H1 (cell line): ENCODE measurements at regions of chr12 and their contacts with region 1.

Region 1: GRCh38 chr12:120200364-120200800 is 529 bp downstream of the RPLP0 start:
- DNase-seq: no peak
- H3K4me3 ChIP-seq: peak overlapping the region; percentile 91 to 99 (median 96)
- H3K27ac ChIP-seq: peak overlapping the region; percentile 85
- H3K4me1 ChIP-seq: peaks cover 0 to 2% (median under 1%) of the 10 kb centered on the region in 4 experiments; a peak in 5 of 7 replicates
- H3K27me3 ChIP-seq: no peaks in the 10 kb centered on the region
- CTCF ChIP-seq: no peak
- EP300 ChIP-seq: no peak
- POLR2A ChIP-seq: no peak
- RAD21 ChIP-seq: no peak

Region 2: DNA sequence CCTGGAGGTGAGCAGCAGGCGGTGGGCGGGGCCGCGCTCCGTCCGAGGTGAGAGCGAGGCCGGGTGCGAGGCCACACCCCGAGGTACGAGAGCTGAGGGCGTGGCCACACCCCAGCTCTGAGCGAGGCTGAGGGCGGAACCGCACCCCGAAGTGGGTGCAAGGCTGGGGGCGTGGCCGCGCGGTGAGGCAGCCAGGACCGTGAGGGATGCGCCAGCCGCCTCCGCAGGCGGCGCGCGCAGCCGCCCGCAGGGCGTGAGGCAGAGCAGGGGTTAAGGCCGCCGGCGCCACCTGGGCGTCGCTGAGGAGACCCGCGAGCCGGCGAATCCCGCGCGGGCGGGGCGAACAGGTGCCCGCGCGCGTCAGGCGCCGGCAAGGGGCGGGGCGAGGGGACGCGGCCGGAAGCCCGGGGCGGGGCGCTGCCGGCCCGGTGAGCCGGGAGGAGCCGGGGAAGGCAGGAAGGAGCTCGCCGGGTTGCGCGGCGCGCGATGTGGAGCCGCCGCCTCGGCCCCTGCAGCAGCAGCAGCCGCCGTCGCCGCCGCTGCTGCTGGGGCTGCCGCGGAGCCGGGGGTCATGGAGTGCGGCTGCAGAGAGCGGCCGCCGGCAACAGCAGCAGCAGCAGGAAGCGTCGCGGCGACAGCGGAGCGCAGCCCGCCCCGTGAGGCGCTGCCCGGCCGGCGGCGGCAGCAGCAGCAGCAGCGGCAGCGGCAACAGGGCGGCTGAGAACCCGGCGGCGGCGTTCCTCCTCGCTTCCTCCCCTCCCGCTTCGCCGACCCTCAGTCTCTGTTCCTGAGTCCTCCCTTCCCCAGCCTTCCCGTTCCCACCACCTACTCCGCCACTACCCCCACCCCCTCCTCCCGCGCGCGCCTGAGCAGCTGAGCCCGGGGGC is 211.4 kb before region 1 on chr12 and contains the start of gene BICDL1:
- CTCF ChIA-PET with region 1: no interaction called
- POLR2A ChIA-PET with region 1: interaction called, 12 read pairs
- DNase-seq: peak; percentile 93 to 96
- H3K4me3 ChIP-seq: peak within 1 kb of the TSS; percentile 59 to 69 (median 62)
- H3K27ac ChIP-seq: no peak within 1 kb of the TSS
- H3K4me1 ChIP-seq: peaks cover 6 to 11% (median 9%) of the 10 kb centered on the region in 4 experiments
- H3K27me3 ChIP-seq: no peaks in the 10 kb centered on the region; a peak in 2 of 7 replicates
- CTCF ChIP-seq: no peak
- EP300 ChIP-seq: no peak
- POLR2A ChIP-seq: no peak
- RAD21 ChIP-seq: no peak
- total RNA-seq, gene BICDL1: 25.9 and 26.9 TPM in 2 replicates

Region 3: GRCh38 chr12:120150919-120151525 is 49.4 kb before region 1 on chr12:
- CTCF ChIA-PET with region 1: interaction called, 4 read pairs
- POLR2A ChIA-PET with region 1: interaction called, 19 read pairs
- DNase-seq: no peak
- H3K4me3 ChIP-seq: no peak overlapping the region
- H3K27ac ChIP-seq: no peak overlapping the region
- H3K4me1 ChIP-seq: no peaks in the 10 kb centered on the region
- H3K27me3 ChIP-seq: no peaks in the 10 kb centered on the region
- CTCF ChIP-seq: no peak
- EP300 ChIP-seq: no peak
- POLR2A ChIP-seq: no peak
- RAD21 ChIP-seq: no peak

Region 4: GRCh38 chr12:120159509-120160237 is 40.7 kb before region 1 on chr12:
- CTCF ChIA-PET with region 1: interaction called, 8 read pairs
- POLR2A ChIA-PET with region 1: interaction called, 358 read pairs
- DNase-seq: no peak
- H3K4me3 ChIP-seq: no peak overlapping the region
- H3K27ac ChIP-seq: no peak overlapping the region
- H3K4me1 ChIP-seq: no peaks in the 10 kb centered on the region
- H3K27me3 ChIP-seq: no peaks in the 10 kb centered on the region
- CTCF ChIP-seq: no peak
- EP300 ChIP-seq: no peak
- POLR2A ChIP-seq: no peak
- RAD21 ChIP-seq: no peak

Region 5: DNA sequence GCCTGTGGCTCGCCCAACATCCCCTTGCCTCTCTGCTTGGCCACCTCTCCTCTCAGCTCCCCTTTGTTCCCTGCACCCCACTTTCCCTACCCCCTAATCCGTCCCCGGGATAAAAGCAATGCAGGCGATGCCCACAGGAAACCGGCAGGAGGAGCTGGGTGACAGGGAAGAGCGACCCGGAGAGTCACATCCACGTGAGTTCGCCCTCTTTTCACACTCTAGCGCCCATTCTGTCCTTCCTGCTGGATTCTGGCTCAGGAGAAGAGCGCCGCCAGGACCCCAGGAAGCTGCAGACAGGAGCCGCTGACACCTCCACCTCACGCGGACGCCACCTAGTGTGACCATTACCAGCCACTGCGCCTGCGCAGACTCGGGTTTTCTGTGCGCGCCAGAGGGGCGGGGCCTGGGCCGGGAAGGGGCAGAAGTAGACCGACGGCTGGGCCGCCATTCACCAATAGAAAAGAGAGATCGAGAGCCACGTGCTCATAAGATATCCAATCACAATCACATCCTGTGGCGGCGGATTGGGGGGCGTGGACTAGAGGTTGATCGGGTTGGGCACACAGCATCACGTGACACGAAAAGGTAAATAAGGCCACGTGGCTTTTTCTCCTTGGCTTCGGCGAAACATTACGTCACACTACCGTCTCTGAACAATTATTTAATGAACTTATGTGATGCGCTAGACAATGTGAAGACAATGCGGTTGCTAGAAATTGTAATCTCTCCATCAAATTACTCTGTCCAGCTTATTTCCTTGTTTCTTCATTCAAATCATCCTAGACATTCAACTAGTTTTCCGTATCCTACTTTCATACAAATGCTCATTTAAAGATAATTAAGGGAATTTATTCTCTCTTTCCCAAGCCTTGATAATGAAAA is 117.1 kb after region 1 on chr12:
- CTCF ChIA-PET with region 1: interaction called, 3 read pairs
- POLR2A ChIA-PET with region 1: interaction called, 16 read pairs
- DNase-seq: peak; percentile 97 to 100
- H3K4me3 ChIP-seq: peak overlapping the region; percentile 33 to 67 (median 56)
- H3K27ac ChIP-seq: peak overlapping the region; percentile 68; the same call in 1 of the 2 replicates
- H3K4me1 ChIP-seq: peaks cover 0 to 8% (median 4%) of the 10 kb centered on the region in 4 experiments; a peak in 3 of 7 replicates
- H3K27me3 ChIP-seq: no peaks in the 10 kb centered on the region
- CTCF ChIP-seq: peak; percentile 28 to 63 (median 45)
- EP300 ChIP-seq: no peak
- POLR2A ChIP-seq: peak in 1 of 2 experiments; percentile 78; a peak in 1 of 3 replicates
- RAD21 ChIP-seq: peak; percentile 23; a peak in 2 of 4 replicates